Dendritic cell treated with granulocyte-macrophage colony-stimulating factor and Interleukin-4, amounts not matched to agents 40 ng/mL and 50 ng/mL, for 4 days (primary cell): ENCODE measurements at regions of chr17 and their contacts with region 1.

Region 1: GRCh38 chr17:45371414-45372327 is 54.9 kb upstream of the MAP3K14 start:
- H3K4me3 Mint-ChIP-seq: peak overlapping the region; percentile 44
- H3K27ac Mint-ChIP-seq: peak overlapping the region; percentile 41
- H3K4me1 Mint-ChIP-seq: peaks cover 47% of the 10 kb centered on the region
- H3K27me3 Mint-ChIP-seq: peaks cover 16% of the 10 kb centered on the region

Region 2: DNA sequence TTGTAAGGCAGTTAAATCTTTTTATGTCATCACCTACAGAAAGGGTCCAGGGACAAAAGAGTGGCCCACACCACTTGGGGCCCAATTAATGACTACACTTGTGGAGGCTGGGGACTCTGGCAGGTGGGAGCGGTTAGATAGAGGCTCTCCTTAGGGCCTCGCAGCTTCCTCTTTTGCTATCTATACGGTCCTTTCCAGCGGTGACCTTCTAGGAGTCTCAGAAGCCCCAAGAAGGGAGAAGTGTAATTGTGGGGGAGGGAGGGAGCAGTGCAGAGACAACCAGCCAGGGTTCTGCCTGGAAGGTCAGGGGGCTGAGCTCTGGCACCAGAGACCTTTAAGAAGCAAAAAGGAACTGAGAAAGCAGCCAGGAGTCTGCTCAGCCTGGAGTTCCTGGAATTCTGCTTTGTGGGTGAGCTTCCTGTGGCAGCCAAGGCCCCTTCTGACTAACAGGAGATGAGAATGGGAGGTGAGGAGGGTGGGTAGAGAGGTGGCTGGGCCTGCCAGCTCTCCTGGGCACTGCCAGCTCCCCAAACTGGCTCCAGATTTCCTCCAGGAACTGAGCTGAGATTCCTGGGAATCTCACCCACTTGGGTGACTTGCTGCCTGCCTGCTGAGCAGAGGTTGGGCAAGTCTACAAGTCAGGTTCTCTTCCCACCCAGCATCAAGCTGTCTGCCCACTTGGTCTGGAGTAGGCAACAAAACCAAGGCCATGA is 38.5 kb before region 1 on chr17:
- intact Hi-C with region 1: loop called (anchors 5 kb)
- H3K4me3 Mint-ChIP-seq: peak overlapping the region; percentile 30
- H3K27ac Mint-ChIP-seq: peak overlapping the region; percentile 88
- H3K4me1 Mint-ChIP-seq: peaks cover 75% of the 10 kb centered on the region
- H3K27me3 Mint-ChIP-seq: no peaks in the 10 kb centered on the region